ENCODE measurements at regions of chr14 and their contacts with region 1.

Region 1: DNA sequence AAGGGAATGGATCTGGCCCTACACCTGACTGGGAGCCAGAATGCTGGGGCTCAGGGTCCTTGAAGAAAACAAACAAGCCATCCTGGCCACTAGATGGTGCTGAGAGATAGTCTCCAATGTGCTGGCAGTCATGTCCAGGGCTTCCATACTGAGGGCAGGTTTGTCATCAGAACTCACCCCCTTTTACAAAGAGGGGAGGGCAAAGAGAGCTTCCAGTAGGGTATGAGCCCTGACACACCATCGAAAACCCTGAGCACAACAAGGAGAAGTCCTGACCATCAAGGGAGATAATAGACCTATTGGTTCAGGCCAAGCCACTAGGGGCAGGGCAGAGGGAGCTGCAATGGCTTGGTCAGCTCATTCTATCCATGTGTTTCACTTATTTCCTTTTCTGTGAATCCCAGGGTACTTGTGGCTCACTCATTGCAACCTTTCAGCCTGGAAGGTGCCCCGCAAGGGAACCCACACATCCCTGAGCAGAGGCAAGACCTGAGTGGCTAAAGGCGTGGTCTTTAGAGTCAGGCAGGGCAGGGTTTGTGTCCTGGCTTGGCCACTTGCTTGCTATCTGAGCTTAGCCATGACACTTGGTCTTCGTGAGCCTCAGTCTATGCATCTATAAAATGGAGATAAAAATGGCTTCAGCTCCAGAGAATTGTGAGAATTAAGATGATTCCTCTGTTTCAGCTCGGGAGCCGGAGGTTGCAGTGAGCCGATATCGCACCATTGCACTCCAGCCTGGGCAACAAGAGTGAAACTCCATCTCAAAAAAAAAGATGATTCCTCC is 6.2 kb upstream of the PLEKHH1 start:
- DNase-seq: peak; percentile 63
- H3K4me3 Mint-ChIP-seq: no peak overlapping the region
- H3K27ac Mint-ChIP-seq: no peak overlapping the region
- H3K4me1 Mint-ChIP-seq: no peaks in the 10 kb centered on the region
- H3K27me3 Mint-ChIP-seq: peaks cover 88% of the 10 kb centered on the region

Region 2: DNA sequence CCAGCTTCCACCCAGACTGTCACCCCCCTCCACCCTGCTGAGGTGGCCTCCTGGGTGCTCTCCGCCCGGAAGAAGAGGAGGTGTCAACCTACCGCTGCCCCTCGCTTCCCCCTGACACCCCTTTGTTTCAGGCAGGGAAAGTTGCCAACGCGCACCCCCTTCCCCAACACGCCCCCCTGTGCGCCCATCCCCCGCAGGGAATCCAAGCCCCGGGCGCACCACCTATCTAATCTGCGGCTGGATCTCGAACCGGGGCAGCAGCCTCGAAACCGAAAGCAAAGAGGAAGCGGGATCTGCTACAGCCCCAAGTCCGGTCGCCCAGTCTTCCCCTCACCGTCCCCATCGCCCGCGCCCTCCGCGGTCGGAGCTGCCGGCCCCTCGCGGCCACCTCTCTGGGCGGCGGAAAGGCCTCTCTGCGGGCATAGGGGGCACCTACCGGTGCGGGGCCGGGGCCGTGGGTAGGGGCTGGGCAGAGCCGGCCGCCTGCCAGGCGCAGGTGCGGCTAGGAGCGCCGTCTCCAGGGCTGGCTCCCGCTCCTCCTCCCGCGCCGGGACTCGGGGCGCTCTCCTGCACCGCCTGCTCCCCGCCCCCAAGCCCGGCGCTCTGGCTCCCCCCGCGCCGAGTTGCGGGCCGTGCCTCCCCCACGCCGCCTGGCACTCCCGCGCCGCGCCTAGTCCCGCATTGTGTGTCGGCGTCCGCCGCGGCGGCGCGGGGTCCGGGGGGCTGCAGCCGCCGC is 12.1 kb before region 1 on chr14:
- CTCF ChIA-PET with region 1: interaction called, 34 read pairs
- DNase-seq: peak; percentile 72
- H3K4me3 Mint-ChIP-seq: peak overlapping the region; percentile 80
- H3K27ac Mint-ChIP-seq: peak overlapping the region; percentile 37
- H3K4me1 Mint-ChIP-seq: peaks cover 19% of the 10 kb centered on the region
- H3K27me3 Mint-ChIP-seq: peaks cover 86% of the 10 kb centered on the region

Region 3: DNA sequence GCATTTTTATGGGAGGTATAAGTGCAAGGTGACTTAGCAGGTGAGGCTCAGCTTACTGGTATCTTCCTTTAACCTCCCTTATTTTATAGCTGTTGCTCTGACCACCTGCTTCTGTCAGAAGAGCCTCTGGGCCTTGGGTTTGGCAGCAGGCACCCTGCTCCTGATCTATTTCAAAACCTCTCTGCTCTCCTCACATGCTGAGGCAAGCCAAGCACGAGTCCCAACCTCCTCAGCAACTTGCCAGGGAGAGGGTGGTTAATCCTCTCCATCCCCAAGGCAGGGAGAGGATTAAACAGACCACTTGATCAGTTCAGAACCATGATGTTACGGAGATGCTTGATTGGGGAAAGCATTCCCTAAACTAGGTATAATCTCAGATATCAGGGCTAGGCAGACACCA is 11.6 kb after region 1 on chr14:
- CTCF ChIA-PET with region 1: interaction called, 10 read pairs
- DNase-seq: no peak
- H3K4me3 Mint-ChIP-seq: no peak overlapping the region
- H3K27ac Mint-ChIP-seq: no peak overlapping the region
- H3K4me1 Mint-ChIP-seq: peaks cover 11% of the 10 kb centered on the region
- H3K27me3 Mint-ChIP-seq: peaks cover 67% of the 10 kb centered on the region

Region 4: GRCh38 chr14:67571272-67571850 is 44.5 kb after region 1 on chr14:
- CTCF ChIA-PET with region 1: interaction called, 79 read pairs
- DNase-seq: peak; percentile 81
- H3K4me3 Mint-ChIP-seq: no peak overlapping the region
- H3K27ac Mint-ChIP-seq: no peak overlapping the region
- H3K4me1 Mint-ChIP-seq: no peaks in the 10 kb centered on the region
- H3K27me3 Mint-ChIP-seq: peaks cover 16% of the 10 kb centered on the region

Region 5: GRCh38 chr14:67583711-67584644 is 57.1 kb after region 1 on chr14:
- CTCF ChIA-PET with region 1: interaction called, 12 read pairs
- DNase-seq: peak; percentile 55
- H3K4me3 Mint-ChIP-seq: no peak overlapping the region
- H3K27ac Mint-ChIP-seq: no peak overlapping the region
- H3K4me1 Mint-ChIP-seq: peaks cover 12% of the 10 kb centered on the region
- H3K27me3 Mint-ChIP-seq: no peaks in the 10 kb centered on the region

Region 6: GRCh38 chr14:67666750-67667449 is 140.0 kb after region 1 on chr14:
- CTCF ChIA-PET with region 1: interaction called, 14 read pairs
- DNase-seq: peak; percentile 45
- H3K4me3 Mint-ChIP-seq: no peak overlapping the region
- H3K27ac Mint-ChIP-seq: no peak overlapping the region
- H3K4me1 Mint-ChIP-seq: peaks cover 32% of the 10 kb centered on the region
- H3K27me3 Mint-ChIP-seq: no peaks in the 10 kb centered on the region